ENCODE measurements at regions of chr9 and their contacts with region 1.

Region 1: GRCh38 chr9:70587201-70587600 is 172.7 kb upstream of the KLF9 start:
- DNase-seq: no peak
- H3K4me3 ChIP-seq: no peak overlapping the region
- H3K27ac ChIP-seq: no peak overlapping the region
- H3K4me1 ChIP-seq: peaks cover 16% of the 10 kb centered on the region
- H3K27me3 ChIP-seq: no peaks in the 10 kb centered on the region
- CTCF ChIP-seq: no peak

Region 2: DNA sequence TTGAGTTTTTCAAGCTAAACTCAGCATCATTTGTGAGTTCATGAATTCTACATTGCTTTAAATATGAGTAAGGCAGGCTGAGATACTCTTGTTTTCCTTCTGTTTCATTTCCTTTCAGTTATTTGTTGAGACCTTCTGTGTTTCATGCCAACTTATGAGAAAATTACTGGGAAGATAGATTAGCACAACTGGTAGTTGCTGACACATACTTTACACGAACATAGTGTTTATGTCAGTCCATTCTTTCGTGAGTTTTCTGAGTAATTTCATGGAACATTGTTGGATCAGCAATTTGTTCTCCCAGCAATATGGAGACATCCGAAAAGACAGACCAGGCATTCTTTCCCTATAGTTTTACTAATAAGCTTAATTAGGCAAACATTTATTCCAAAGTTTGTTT is 430.5 kb before region 1 on chr9:
- CTCF ChIA-PET with region 1: no interaction called
- dilution Hi-C with region 1: loop called (anchors 10 kb)
- in situ Hi-C with region 1: no loop called
- intact Hi-C with region 1: no loop called
- DNase-seq: no peak
- H3K4me3 ChIP-seq: no peak overlapping the region
- H3K27ac ChIP-seq: no peak overlapping the region
- H3K4me1 ChIP-seq: no peaks in the 10 kb centered on the region
- H3K27me3 ChIP-seq: no peaks in the 10 kb centered on the region
- CTCF ChIP-seq: no peak

Region 3: GRCh38 chr9:70352802-70353201 is 234.4 kb before region 1 on chr9:
- CTCF ChIA-PET with region 1: no interaction called
- dilution Hi-C with region 1: no loop called
- in situ Hi-C with region 1: loop called (anchors 10 to 25 kb)
- intact Hi-C with region 1: no loop called
- DNase-seq: no peak
- H3K4me3 ChIP-seq: no peak overlapping the region
- H3K27ac ChIP-seq: no peak overlapping the region
- H3K4me1 ChIP-seq: no peaks in the 10 kb centered on the region
- H3K27me3 ChIP-seq: no peaks in the 10 kb centered on the region
- CTCF ChIP-seq: peak; percentile 22 to 57

Measured in mammary epithelial cell (primary cell).